CD8-positive, alpha-beta T cell (primary cell): ENCODE measurements at regions of chr1 and their contacts with region 1.

Region 1: DNA sequence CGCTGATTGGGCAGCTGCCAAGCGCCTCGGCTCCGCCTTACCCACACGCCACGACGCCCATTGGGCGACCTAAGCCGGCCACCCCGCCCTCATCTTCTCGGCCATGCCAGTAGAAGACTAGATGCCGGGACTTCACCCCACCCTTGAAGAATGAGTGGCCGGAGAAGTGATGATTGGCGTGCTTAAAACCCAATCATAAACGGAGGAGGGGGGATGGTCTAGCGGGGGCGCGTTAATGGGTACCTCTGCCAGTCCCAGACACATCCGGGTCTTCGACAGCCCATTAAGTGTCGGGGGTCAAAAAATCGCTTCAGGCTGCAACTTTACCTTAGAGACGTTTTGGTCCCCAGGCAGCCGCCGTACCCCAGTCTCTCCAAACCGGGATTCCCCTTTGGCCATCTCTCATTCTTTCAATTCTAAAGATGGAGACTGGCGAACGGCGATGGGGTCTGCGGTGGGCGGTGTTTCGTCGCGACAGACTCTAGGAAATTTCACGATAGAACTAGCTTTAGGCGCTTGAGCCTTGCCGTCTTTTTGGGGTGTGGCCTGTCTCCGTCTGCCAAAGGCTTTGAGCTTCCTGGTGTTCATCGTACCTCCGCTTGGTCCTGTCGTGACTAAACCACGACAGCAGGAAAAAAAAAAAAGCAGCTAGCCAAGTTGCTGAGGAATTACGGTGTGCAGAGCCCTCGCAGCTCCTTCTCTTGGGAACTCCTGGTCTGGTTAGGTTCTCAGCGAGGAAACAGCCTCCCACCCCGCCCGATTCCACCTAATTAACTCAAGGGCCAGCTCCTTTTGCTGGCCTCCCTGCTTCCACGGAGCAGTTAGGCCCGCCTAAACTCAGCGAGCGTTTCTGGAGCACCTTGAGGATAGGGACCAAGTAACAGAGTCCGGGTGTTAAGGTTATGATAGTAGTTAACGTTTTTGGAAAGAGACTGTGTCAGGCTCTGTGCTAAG is at the start of gene GATAD2B:
- DNase-seq: peak; percentile 97 to 100 (median 99)
- ATAC-seq: peak; percentile 89
- H3K4me3 ChIP-seq: peak within 1 kb of the TSS; percentile 81 to 83
- H3K4me3 Mint-ChIP-seq: peak within 1 kb of the TSS; percentile 93
- H3K27ac ChIP-seq: peak within 1 kb of the TSS; percentile 83 to 95
- H3K27ac Mint-ChIP-seq: peak within 1 kb of the TSS; percentile 97
- H3K4me1 ChIP-seq: peaks cover 44% of the 10 kb centered on the region
- H3K4me1 Mint-ChIP-seq: peaks cover 44% of the 10 kb centered on the region
- H3K27me3 ChIP-seq: no peaks in the 10 kb centered on the region
- H3K27me3 Mint-ChIP-seq: no peaks in the 10 kb centered on the region
- CTCF ChIP-seq: no peak
- total RNA-seq, gene GATAD2B: 52.0 to 52.1 TPM

Region 2: GRCh38 chr1:153783233-153784190 is 139.7 kb before region 1 on chr1:
- CTCF ChIA-PET with region 1: no interaction called
- POLR2A ChIA-PET with region 1: no interaction called
- intact Hi-C with region 1: loop called in 1 of 2 experiments (anchors 1 kb)
- DNase-seq: peak; percentile 84 to 96 (median 91)
- ATAC-seq: peak; percentile 98
- H3K4me3 ChIP-seq: peak overlapping the region; percentile 91 to 93
- H3K4me3 Mint-ChIP-seq: peak overlapping the region; percentile 88
- H3K27ac ChIP-seq: peak overlapping the region; percentile 92 to 99
- H3K27ac Mint-ChIP-seq: peak overlapping the region; percentile 95
- H3K4me1 ChIP-seq: peaks cover 12% of the 10 kb centered on the region
- H3K4me1 Mint-ChIP-seq: peaks cover 10% of the 10 kb centered on the region
- H3K27me3 ChIP-seq: no peaks in the 10 kb centered on the region
- H3K27me3 Mint-ChIP-seq: no peaks in the 10 kb centered on the region
- CTCF ChIP-seq: no peak

Region 3: DNA sequence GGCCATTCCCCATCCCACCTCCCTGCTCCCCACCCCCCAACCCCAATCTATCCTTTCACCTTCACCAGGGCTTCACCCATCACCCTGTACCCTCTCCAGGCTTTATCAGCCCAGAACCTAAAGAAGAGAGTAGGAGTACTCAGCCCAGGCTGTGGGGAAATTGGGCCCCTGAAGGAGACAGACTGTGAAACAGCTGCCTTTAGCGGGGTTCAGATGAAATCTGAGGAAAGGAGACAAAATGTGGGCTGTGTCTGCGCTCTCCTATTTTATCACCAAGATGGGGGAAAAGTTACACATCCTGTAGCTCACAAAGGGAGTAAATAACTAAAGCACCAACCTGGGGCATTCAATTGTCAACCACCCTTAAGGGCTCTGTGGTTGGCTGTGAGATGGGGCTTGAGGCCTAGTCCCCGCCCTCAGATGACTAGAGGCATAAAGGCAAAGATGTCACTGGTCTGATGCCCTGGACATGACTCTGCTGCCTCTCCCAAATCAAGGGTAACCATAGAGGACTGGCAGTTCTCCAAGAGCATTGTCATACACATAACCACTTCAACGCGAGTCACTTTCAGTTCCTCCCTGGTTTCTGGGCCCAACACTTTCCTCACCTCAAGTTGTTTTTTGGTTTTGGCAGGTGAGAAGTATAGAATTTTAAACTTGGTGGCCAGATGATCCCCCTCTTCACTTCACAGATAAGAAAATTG is 118.1 kb before region 1 on chr1:
- CTCF ChIA-PET with region 1: no interaction called
- POLR2A ChIA-PET with region 1: no interaction called
- intact Hi-C with region 1: loop called in 1 of 2 experiments (anchors 1 kb)
- DNase-seq: peak; percentile 37 to 96 (median 72)
- ATAC-seq: peak; percentile 97
- H3K4me3 ChIP-seq: no peak overlapping the region
- H3K4me3 Mint-ChIP-seq: peak overlapping the region; percentile 30
- H3K27ac ChIP-seq: peak overlapping the region; percentile 56 to 76
- H3K27ac Mint-ChIP-seq: peak overlapping the region; percentile 87
- H3K4me1 ChIP-seq: peaks cover 29% of the 10 kb centered on the region
- H3K4me1 Mint-ChIP-seq: peaks cover 30% of the 10 kb centered on the region
- H3K27me3 ChIP-seq: no peaks in the 10 kb centered on the region
- H3K27me3 Mint-ChIP-seq: no peaks in the 10 kb centered on the region
- CTCF ChIP-seq: no peak

Region 4: DNA sequence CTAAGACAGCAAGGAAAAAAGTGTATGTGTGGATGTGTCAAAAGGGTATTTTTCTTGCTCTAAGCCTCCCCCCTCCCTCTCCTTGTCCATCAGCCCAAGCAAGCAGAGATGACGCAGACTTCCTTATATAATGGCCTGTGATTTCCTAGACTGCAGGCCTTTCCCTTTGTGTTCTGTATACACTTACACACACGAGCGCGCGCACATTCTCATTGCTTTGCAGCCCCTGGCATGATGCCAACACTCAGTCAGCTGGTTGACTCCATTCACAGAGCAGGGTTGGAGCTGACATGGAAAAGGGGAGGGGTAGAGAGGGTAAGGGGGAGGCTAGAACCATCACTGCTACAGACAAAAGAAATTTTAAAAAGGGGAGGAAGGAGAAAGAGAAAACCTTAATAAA is 42.3 kb before region 1 on chr1:
- CTCF ChIA-PET with region 1: no interaction called
- POLR2A ChIA-PET with region 1: interaction called, 3 read pairs
- intact Hi-C with region 1: loop called in 1 of 2 experiments (anchors 5 kb)
- DNase-seq: peak; percentile 3 to 72 (median 44)
- ATAC-seq: peak; percentile 73
- H3K4me3 ChIP-seq: no peak overlapping the region
- H3K4me3 Mint-ChIP-seq: no peak overlapping the region
- H3K27ac ChIP-seq: no peak overlapping the region
- H3K27ac Mint-ChIP-seq: no peak overlapping the region
- H3K4me1 ChIP-seq: peaks cover 51% of the 10 kb centered on the region
- H3K4me1 Mint-ChIP-seq: peaks cover 36% of the 10 kb centered on the region
- H3K27me3 ChIP-seq: no peaks in the 10 kb centered on the region
- H3K27me3 Mint-ChIP-seq: no peaks in the 10 kb centered on the region
- CTCF ChIP-seq: no peak

Region 5: GRCh38 chr1:153958111-153958960 is 35.1 kb after region 1 on chr1 and contains the start of gene CRTC2:
- CTCF ChIA-PET with region 1: interaction called, 8 read pairs
- POLR2A ChIA-PET with region 1: interaction called, 13 read pairs
- intact Hi-C with region 1: loop called (anchors 1 to 5 kb)
- DNase-seq: peak; percentile 92 to 99 (median 97)
- ATAC-seq: peak; percentile 86
- H3K4me3 ChIP-seq: peak within 1 kb of the TSS; percentile 97 to 98
- H3K4me3 Mint-ChIP-seq: peak within 1 kb of the TSS; percentile 99
- H3K27ac ChIP-seq: peak within 1 kb of the TSS; percentile 82 to 93
- H3K27ac Mint-ChIP-seq: peak within 1 kb of the TSS; percentile 98
- H3K4me1 ChIP-seq: peaks cover 53% of the 10 kb centered on the region
- H3K4me1 Mint-ChIP-seq: peaks cover 65% of the 10 kb centered on the region
- H3K27me3 ChIP-seq: no peaks in the 10 kb centered on the region
- H3K27me3 Mint-ChIP-seq: no peaks in the 10 kb centered on the region
- CTCF ChIP-seq: no peak
- total RNA-seq, gene CRTC2: 169 to 201 TPM

Region 6: DNA sequence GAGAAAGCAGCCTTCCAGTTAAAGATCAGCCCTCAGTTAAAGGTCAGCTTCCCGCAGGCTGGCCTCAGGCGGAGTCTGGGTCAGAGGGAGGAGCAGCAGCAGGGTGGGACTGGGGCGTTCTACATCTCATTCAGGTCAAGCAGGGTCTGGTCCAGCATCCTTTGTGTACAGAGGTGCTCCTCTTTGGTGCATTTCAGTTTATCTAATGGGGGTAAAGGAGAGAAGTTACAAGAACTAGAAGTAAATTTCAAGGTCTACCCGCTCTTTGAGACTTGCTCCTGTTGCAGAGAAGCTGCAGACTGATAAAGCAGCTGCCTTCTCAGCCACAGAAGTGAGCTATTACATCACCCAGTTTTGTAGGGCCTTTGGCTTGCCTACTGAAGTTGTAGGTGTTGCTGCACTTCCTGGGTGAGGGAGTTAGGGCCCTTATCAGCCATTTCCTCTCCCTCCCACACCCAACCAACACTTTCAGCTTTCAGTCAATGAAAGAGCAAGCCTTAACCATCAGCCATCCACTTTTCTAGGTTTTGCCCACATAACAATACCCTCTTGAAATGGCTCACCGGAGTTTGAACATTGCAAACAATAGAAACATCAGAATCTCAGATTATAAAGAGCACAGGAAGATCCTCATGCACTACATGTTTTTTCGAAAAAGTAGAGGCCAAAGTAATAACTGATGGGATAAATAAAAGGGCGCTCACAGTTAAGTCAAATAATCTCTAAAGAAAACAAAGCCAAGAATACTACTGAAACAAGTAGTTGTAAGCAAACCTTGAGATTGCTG is 234.5 kb after region 1 on chr1:
- CTCF ChIA-PET with region 1: no interaction called
- POLR2A ChIA-PET with region 1: no interaction called
- intact Hi-C with region 1: loop called in 1 of 2 experiments (anchors 2 kb)
- DNase-seq: peak; percentile 41 to 93 (median 71)
- ATAC-seq: peak; percentile 98
- H3K4me3 ChIP-seq: peak overlapping the region in 1 of 2 experiments; percentile 16
- H3K4me3 Mint-ChIP-seq: peak overlapping the region; percentile 61
- H3K27ac ChIP-seq: peak overlapping the region; percentile 51 to 61
- H3K27ac Mint-ChIP-seq: peak overlapping the region; percentile 95
- H3K4me1 ChIP-seq: peaks cover 72% of the 10 kb centered on the region
- H3K4me1 Mint-ChIP-seq: peaks cover 78% of the 10 kb centered on the region
- H3K27me3 ChIP-seq: no peaks in the 10 kb centered on the region
- H3K27me3 Mint-ChIP-seq: no peaks in the 10 kb centered on the region
- CTCF ChIP-seq: no peak

Region 7: GRCh38 chr1:154272217-154272998 is 349.2 kb after region 1 on chr1 and contains the start of gene HAX1:
- CTCF ChIA-PET with region 1: no interaction called
- POLR2A ChIA-PET with region 1: no interaction called
- intact Hi-C with region 1: loop called in 1 of 2 experiments (anchors 2 kb)
- DNase-seq: peak; percentile 91 to 100 (median 94)
- ATAC-seq: peak; percentile 85
- H3K4me3 ChIP-seq: peak within 1 kb of the TSS; percentile 85 to 91
- H3K4me3 Mint-ChIP-seq: peak within 1 kb of the TSS; percentile 94
- H3K27ac ChIP-seq: peak within 1 kb of the TSS; percentile 88 to 92
- H3K27ac Mint-ChIP-seq: peak within 1 kb of the TSS; percentile 98
- H3K4me1 ChIP-seq: peaks cover 22% of the 10 kb centered on the region
- H3K4me1 Mint-ChIP-seq: peaks cover 38% of the 10 kb centered on the region
- H3K27me3 ChIP-seq: no peaks in the 10 kb centered on the region
- H3K27me3 Mint-ChIP-seq: no peaks in the 10 kb centered on the region
- CTCF ChIP-seq: peak; percentile 75
- total RNA-seq, gene HAX1: 56.8 to 58.4 TPM